ENCODE measurements at regions of chr12 and their contacts with region 1.

Region 1: DNA sequence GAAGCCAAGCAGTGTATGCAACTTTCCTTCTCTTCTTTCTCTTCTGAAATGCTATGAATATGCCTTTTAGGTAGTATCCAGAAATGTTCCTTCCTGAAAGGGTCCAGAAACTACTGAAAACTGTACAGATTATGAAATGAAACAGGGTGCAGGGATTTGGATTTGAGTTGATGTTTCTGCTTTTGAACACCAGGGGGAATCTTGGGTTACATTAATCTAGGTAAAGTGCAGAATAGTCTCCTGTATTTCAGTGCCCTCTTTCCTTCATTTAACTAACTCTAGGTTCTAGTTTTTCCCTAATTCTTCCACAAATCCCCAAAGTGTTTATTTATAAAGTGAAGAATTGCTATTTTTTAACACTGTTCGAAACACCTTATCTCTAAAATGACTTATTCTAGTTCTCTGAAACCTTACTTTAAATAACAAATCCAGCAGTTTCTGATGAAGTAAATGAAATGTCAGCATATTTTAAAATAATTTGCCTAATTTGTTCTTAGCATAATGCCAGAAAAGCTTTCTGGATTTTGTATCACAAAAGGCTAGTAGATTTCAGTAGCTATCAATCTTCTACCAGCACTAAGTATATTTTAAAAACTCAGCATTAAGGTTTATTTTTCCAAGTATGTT is 111.9 kb downstream of the LRRK2 start:
- DNase-seq: peak; percentile 34
- H3K4me3 Mint-ChIP-seq: no peak overlapping the region
- H3K27ac Mint-ChIP-seq: no peak overlapping the region
- H3K4me1 Mint-ChIP-seq: peaks cover 5% of the 10 kb centered on the region
- H3K27me3 Mint-ChIP-seq: no peaks in the 10 kb centered on the region
- CTCF ChIP-seq: peak; percentile 54

Region 2: GRCh38 chr12:40261937-40262336 is 74.7 kb before region 1 on chr12:
- CTCF ChIA-PET with region 1: no interaction called
- POLR2A ChIA-PET with region 1: no interaction called
- intact Hi-C with region 1: no loop called
- DNase-seq: no peak
- H3K4me3 Mint-ChIP-seq: no peak overlapping the region
- H3K27ac Mint-ChIP-seq: no peak overlapping the region
- H3K4me1 Mint-ChIP-seq: no peaks in the 10 kb centered on the region
- H3K27me3 Mint-ChIP-seq: no peaks in the 10 kb centered on the region
- CTCF ChIP-seq: no peak

Region 3: GRCh38 chr12:40325349-40325960 is 11.2 kb before region 1 on chr12:
- CTCF ChIA-PET with region 1: interaction called, 12 read pairs
- POLR2A ChIA-PET with region 1: no interaction called
- intact Hi-C with region 1: no loop called
- DNase-seq: peak; percentile 60
- H3K4me3 Mint-ChIP-seq: no peak overlapping the region
- H3K27ac Mint-ChIP-seq: no peak overlapping the region
- H3K4me1 Mint-ChIP-seq: no peaks in the 10 kb centered on the region
- H3K27me3 Mint-ChIP-seq: no peaks in the 10 kb centered on the region
- CTCF ChIP-seq: peak; percentile 45

Measured in MCF 10A (cell line).